ENCODE measurements at regions of chr6 and their contacts with region 1.

Region 1: DNA sequence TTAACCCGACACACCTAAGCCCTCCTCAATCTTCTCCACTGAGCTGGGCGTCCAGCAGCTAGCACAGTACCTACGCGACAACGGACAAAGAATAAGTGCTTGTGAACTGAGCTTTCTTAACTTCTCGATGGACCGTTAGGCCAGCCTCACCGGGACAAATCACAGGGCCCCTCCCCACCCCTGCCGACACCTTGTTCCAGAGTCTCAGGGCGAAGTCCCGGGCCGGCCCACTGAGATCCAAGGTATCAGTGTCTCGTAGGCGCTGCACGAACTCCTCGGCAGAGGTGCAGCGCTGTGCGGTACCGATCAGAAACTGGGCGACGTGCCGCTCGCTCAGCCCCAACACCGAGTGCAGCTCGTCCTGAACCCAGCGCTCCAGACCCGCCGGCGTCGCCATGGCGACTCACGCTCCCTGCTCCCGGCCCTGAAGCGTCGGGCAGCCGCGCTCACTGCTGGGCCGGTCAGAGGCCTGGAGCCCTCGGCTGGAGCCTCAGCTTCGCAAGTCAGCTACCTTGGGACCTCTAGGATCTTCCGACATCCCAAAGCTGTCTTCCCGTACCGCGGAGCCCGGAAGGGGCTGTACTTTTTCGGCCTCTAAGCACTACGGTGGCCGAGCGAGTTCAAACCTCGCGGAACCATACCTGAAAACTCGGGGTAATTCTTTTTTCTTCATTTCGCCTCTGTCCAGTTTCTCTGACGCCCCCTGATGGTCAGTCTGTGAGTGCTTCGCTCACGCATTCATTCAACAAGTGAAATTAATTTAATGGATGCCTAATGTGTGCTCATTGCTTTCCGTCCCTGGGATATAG is at the start of gene DHX16:
- DNase-seq: peak; percentile 97
- H3K4me3 ChIP-seq: peak within 1 kb of the TSS; percentile 54 to 98 (median 94)
- H3K27ac ChIP-seq: peak within 1 kb of the TSS; percentile 70
- H3K4me1 ChIP-seq: peaks cover 9% of the 10 kb centered on the region
- H3K27me3 ChIP-seq: no peaks in the 10 kb centered on the region
- CTCF ChIP-seq: peak; percentile 78 to 97
- total RNA-seq, gene DHX16: 26.0 to 30.9 TPM

Region 2: GRCh38 chr6:30483677-30484279 is 188.9 kb before region 1 on chr6:
- CTCF ChIA-PET with region 1: no interaction called
- dilution Hi-C with region 1: no loop called
- in situ Hi-C with region 1: loop called in 1 of 2 experiments (anchors 10 kb)
- intact Hi-C with region 1: loop called (anchors 1 kb)
- DNase-seq: peak; percentile 50
- H3K4me3 ChIP-seq: no peak overlapping the region
- H3K27ac ChIP-seq: no peak overlapping the region
- H3K4me1 ChIP-seq: peaks cover 15% of the 10 kb centered on the region
- H3K27me3 ChIP-seq: peaks cover 10% of the 10 kb centered on the region
- CTCF ChIP-seq: peak; percentile 50 to 60

Region 3: DNA sequence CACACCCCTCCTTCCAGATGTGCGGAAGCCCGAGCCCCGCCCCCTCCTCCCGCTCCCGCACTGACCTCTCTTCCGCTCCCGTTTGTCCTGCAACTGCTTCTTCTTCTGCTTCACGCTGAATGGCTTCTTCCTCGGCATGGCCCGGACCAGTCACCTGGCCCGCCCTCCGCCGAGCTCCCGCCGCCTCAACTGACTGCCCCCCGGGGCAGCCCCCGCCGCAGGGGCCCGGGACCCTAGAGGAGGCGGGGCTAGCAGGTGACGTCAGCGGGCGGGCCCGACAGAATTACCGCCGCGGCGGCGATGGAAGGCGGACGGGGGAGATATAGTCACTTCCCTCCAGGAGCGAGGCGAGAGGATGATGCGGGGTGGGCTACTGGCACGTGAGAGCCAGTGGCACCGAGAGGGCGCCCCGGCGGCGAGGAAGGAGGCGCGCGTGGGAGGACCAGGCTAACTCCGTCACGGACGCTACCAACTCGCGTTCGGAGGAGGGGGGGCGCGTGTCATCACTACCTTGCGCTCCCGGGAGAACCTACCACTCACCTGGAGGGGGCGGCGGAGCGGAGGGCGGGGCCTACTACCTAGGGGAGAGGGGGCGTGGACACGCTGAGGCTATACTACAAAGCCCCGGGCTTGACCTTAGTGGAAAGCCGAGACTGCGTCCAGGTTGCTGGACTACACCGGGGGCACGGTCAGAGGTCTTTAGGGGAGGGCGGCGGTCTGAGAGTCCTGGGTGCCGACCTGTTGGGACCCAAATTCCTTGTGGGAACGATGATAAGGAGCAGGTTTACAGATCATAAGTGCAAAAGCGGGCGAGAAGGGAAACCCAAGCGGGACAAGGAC is 116.4 kb before region 1 on chr6 and contains the start of gene GNL1:
- CTCF ChIA-PET with region 1: no interaction called
- dilution Hi-C with region 1: no loop called
- in situ Hi-C with region 1: no loop called
- intact Hi-C with region 1: loop called (anchors 5 kb)
- DNase-seq: peak; percentile 95
- H3K4me3 ChIP-seq: peak within 1 kb of the TSS; percentile 68 to 98 (median 93)
- H3K27ac ChIP-seq: peak within 1 kb of the TSS; percentile 90
- H3K4me1 ChIP-seq: peaks cover 13% of the 10 kb centered on the region
- H3K27me3 ChIP-seq: no peaks in the 10 kb centered on the region
- CTCF ChIP-seq: no peak
- total RNA-seq, gene GNL1: 40.8 to 84.4 TPM

Region 4: DNA sequence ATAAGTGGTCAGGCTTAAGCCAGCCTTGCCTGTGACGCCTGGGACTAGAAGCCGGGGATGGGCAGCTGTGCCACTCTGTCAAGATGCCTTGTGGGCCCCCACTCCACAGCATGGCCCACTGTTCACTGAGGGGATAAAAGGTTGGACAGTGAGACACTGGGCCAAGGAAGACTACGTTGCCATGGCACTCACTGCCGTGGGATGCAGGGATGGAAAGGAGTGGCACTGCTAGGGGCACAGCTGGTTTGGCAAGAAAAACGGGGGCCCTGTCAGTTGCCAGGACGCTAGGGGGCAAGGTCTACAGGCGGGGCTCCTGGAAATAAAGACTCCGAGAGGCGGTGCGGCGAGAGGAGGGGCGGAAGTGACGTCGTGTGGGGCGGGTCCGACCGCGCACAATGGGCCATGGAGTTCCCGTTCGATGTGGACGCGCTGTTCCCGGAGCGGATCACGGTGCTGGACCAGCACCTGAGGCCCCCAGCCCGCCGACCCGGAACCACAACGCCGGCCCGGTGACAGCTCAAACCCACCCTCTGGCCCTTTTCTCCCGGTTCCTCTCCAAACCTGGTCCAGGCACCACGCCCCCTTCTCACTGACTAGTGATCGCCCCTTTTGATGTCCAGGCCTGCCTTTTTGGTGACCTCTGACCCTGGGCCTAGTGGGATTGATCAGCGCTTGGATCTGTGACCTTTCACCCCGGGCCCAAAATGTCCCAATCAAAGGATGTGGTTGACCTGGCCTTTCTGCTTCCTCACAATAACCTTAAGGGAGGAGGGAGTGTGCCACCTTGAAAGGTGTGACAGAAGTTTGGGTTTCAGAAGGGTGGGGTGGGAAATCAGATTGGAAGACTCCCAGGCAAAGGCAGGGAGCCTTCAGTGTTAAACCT is 45.9 kb before region 1 on chr6 and contains the start of gene ATAT1:
- CTCF ChIA-PET with region 1: no interaction called
- dilution Hi-C with region 1: no loop called
- in situ Hi-C with region 1: no loop called
- intact Hi-C with region 1: loop called (anchors 1 kb)
- DNase-seq: peak; percentile 68
- H3K4me3 ChIP-seq: peak within 1 kb of the TSS; percentile 52 to 77 (median 65)
- H3K27ac ChIP-seq: peak within 1 kb of the TSS; percentile 71
- H3K4me1 ChIP-seq: peaks cover 10% of the 10 kb centered on the region
- H3K27me3 ChIP-seq: no peaks in the 10 kb centered on the region
- CTCF ChIP-seq: peak; percentile 13 to 47
- total RNA-seq, gene ATAT1: 5.2 to 6.9 TPM

Region 5: GRCh38 chr6:30686908-30687658 is 14.4 kb after region 1 on chr6:
- CTCF ChIA-PET with region 1: interaction called, 11 read pairs
- dilution Hi-C with region 1: no loop called
- in situ Hi-C with region 1: no loop called
- intact Hi-C with region 1: loop called (anchors 1 kb)
- DNase-seq: peak; percentile 99
- H3K4me3 ChIP-seq: peak overlapping the region; percentile 77 to 88 (median 83)
- H3K27ac ChIP-seq: peak overlapping the region; percentile 86
- H3K4me1 ChIP-seq: peaks cover 42% of the 10 kb centered on the region
- H3K27me3 ChIP-seq: no peaks in the 10 kb centered on the region
- CTCF ChIP-seq: no peak

Region 6: DNA sequence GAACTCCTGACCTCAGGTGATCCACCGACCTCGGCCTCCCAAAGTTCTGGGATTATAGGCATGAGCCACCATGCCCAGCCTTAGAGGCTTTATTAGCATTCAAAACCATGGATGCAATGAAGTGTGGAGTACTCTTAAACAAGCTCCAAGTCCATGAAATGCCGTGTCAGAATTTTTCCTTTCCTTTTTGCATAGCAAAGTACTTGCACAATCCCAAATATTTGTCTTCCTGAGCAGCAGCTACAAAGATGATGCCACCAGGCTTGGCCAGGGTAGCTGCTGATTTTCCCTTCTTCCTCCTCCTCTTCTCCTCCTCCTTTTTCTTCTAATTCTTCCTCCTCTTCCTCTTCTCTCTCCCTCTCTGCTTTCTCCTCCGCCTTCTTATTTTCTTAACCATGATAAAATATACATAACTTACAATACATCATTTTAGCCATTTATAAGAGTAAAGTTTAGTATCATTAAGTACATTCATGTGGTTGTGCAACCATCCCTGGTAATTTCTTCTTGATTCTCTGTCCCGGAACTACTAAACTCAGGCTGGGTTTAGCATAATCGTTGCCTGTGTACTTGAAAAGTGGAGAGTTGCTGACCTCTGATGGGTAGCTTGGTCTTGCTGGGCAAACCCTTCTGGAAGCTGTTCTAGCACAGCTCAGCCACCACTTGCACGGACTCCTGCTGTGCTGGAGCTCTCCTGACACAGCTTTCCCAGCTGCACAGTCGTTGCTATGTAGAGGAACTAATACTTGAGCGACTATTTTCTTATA is 288.4 kb after region 1 on chr6:
- CTCF ChIA-PET with region 1: no interaction called
- dilution Hi-C with region 1: no loop called
- in situ Hi-C with region 1: no loop called
- intact Hi-C with region 1: no loop called
- DNase-seq: no peak
- H3K4me3 ChIP-seq: no peak overlapping the region
- H3K27ac ChIP-seq: no peak overlapping the region
- H3K4me1 ChIP-seq: no peaks in the 10 kb centered on the region
- H3K27me3 ChIP-seq: no peaks in the 10 kb centered on the region
- CTCF ChIP-seq: no peak